ENCODE measurements at regions of chr11 and their contacts with region 1.

Region 1: GRCh38 chr11:2151500-2152257 is 9.3 kb downstream of the INS start:
- DNase-seq: peak in 2 of 3 donors; percentile 68 to 83
- ATAC-seq: peak; percentile 52 to 64 (median 62)
- H3K4me3 ChIP-seq: no peak overlapping the region
- H3K27ac ChIP-seq: peak overlapping the region in 1 of 3 donors; percentile 33
- H3K4me1 ChIP-seq: peaks cover 0 to 62% (median 21%) of the 10 kb centered on the region in 4 donors
- H3K27me3 ChIP-seq: no peaks in the 10 kb centered on the region
- CTCF ChIP-seq: peak; percentile 63 to 93 (median 68)
- POLR2A ChIP-seq: no peak

Region 2: DNA sequence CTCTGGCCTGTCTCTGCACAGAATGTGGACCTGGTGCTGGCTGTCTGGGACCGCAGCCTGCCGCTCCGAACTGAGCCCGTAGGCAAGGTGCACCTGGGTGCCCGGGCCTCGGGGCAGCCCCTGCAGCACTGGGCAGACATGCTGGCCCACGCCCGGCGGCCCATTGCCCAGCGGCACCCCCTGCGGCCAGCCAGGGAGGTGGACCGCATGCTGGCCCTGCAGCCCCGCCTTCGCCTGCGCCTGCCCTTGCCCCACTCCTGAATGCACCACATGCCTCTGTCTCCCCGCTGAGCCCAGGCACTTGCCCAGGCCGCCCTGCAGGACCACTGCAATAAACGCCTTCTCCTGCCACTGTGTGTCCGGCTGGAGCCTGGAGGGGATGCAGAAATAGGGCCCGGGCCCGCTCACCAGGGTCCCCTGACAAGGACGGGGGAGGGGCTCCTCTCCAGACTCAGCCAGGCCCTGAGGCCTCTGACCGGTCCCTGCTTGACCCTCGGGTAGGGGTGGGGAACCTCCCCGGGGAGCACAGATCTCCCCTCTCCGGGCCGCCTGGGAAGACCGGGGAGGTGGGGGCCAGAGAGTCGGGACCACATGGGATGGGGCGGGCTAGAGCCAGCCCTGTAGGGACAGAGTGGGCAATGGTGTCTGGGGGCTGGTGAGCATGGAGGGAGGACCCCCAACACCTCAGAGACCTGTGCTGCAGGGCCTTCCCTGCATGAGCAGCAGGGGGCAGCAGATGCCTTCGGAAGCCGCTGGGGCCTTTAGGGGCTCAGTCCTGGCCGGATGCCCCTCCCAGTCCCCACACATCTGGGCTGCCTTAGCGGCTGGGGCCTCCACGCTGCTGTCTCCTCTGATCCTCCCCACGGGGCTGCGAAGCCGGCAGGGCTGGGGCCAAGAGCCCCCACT is 314.3 kb before region 1 on chr11:
- intact Hi-C with region 1: loop called in 1 of 2 experiments (anchors 10 kb)
- DNase-seq: peak in 2 of 3 donors; percentile 65 to 74
- ATAC-seq: peak; percentile 31 to 54 (median 34)
- H3K4me3 ChIP-seq: no peak overlapping the region
- H3K27ac ChIP-seq: no peak overlapping the region
- H3K4me1 ChIP-seq: peaks cover 0 to 9% (median 0%) of the 10 kb centered on the region in 4 donors
- H3K27me3 ChIP-seq: no peaks in the 10 kb centered on the region
- CTCF ChIP-seq: peak; percentile 76 to 80 (median 78)
- POLR2A ChIP-seq: no peak

Region 3: DNA sequence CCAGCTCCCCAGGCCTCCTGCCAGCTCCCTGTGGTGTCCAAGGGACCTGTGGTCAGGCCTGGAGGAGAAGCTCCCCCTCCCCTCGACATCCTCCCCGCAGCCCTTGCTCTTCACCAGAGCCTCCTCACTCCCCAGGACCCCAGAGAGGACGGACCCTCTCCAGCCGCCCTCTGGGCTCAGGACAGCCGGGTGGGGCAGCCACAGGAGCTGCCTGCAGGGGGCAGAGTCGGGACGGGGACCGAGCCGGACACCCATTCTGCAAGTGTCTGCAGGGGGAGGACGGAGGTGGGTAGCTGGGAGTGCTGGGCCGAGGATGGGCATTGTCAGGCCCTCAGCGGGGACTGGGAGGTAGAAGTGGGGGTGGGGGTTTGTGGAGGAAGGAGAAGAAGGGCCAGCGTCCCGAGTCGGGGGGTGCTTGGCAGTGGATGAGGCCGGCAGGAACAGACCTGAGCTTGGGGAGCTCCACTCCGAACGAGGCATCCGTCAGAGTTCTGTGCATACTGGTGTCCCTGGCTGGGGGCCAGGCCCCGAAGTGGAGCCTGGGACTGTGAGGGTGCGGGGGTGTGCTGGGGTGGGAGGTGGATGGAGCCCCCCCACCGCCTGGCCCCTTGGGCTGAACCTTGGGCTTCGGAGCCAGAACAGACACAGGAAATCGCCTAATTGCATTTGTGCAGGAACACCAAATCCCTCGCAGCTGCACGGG is 275.2 kb before region 1 on chr11:
- intact Hi-C with region 1: loop called in 1 of 2 experiments (anchors 10 kb)
- DNase-seq: peak; percentile 56 to 62 (median 60)
- ATAC-seq: peak in 3 of 4 donors; percentile 38 to 56 (median 49)
- H3K4me3 ChIP-seq: no peak overlapping the region
- H3K27ac ChIP-seq: no peak overlapping the region
- H3K4me1 ChIP-seq: no peaks in the 10 kb centered on the region
- H3K27me3 ChIP-seq: no peaks in the 10 kb centered on the region
- CTCF ChIP-seq: peak; percentile 41 to 53 (median 46)
- POLR2A ChIP-seq: no peak

Region 4: GRCh38 chr11:2277008-2277346 is 125.3 kb after region 1 on chr11:
- intact Hi-C with region 1: no loop called
- DNase-seq: no peak
- ATAC-seq: peak in 1 of 4 donors; percentile 15
- H3K4me3 ChIP-seq: no peak overlapping the region
- H3K27ac ChIP-seq: no peak overlapping the region
- H3K4me1 ChIP-seq: no peaks in the 10 kb centered on the region
- H3K27me3 ChIP-seq: no peaks in the 10 kb centered on the region
- CTCF ChIP-seq: no peak
- POLR2A ChIP-seq: no peak

Measured in right lobe of liver (tissue), 6 donors.